Tibial artery (tissue), 4 donors: ENCODE measurements at regions of chr16 and their contacts with region 1.

Region 1: DNA sequence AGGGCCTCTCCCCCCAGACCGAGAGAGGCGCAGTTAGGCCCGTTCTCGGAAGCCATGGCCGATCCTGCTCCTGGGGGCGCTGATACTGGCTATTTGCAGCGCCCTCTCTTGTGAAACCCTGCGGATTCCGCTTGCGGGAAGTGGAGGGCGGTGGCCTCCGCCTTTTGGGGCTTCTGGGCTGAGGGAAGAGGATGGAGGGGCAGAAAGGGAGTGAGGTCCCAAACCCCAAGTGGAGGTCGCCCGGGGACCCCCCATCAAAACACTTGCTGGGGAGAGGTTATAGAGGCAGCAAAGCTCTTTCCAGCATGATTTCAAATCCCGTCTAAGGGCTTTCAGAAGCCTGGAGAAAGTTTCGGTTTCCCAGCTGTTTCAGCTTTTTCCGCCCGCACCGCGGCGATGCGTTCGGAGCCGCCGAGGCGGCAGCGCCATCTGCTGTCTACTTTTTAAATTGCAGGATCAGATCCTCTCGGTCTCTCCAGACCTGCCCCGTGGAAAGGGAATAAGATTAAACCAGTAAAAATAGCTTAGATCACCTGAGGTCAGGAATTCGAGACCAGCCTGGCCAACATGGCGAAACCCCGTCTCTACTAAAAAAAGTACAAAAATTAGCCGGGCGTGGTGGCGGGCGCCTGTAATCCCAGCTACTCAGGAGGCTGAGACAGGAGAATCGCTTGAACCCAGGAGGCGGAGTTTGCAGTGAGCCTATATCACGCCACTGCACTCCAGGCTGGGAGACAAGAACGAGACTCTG is 15.8 kb downstream of the SNX20 start:
- DNase-seq: peak; percentile 66 to 88
- H3K4me3 ChIP-seq: peak overlapping the region; percentile 50 to 56
- H3K27ac ChIP-seq: peak overlapping the region; percentile 64 to 67
- H3K4me1 ChIP-seq: peaks cover 0 to 33% (median 12%) of the 10 kb centered on the region in 4 donors
- H3K27me3 ChIP-seq: no peaks in the 10 kb centered on the region
- CTCF ChIP-seq: peak; percentile 85 to 91

Region 2: DNA sequence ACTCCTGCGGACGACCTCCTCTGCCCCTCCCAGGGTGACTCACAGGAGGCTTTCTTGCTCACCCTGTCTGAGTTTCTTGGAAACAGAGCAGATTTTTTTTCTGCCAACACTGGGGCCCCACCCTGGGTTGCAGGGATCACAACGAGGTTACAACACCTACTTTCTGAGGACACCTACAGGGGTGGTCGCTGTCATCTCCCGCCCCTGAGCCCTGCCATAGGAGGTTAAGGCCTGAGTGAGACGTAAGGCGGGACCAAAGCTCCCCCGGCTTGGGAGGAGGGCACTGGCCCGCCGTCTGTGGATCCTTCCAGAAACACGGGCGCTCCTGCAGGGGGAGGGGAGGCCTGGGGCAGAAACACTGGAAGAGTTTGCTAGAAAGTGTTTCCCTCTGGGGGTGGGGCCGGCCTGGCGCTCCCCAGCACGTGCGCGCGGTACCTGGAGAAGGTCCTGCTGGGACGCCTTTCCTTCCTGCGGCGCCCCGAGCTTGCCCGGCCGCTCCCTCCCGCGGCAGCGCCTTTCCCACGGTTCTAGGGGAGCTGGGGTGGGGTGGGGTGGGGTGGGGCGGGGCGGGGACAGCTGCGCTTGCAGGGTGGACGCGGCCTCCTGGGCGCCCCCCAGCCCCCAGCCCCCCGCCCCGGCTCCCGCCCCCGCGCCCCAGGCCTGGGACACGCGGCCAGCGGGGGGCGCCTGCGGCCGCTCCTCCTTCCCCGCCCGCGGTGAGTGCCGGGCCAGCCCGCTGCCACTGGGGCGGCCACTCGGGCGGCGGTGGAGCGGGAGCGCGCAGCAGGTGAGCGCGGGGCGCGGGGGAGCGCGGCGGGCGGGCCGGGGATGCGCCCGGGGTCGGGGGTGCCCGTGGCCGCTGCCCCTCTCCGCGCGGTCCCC is 419.6 kb before region 1 on chr16:
- intact Hi-C with region 1: loop called (anchors 10 kb)
- DNase-seq: peak; percentile 63 to 77
- H3K4me3 ChIP-seq: peak overlapping the region; percentile 61 to 76
- H3K27ac ChIP-seq: peak overlapping the region; percentile 65
- H3K4me1 ChIP-seq: peaks cover 0 to 21% (median 18%) of the 10 kb centered on the region in 4 donors
- H3K27me3 ChIP-seq: no peaks in the 10 kb centered on the region
- CTCF ChIP-seq: peak in 1 of 2 experiments; percentile 10

Region 3: DNA sequence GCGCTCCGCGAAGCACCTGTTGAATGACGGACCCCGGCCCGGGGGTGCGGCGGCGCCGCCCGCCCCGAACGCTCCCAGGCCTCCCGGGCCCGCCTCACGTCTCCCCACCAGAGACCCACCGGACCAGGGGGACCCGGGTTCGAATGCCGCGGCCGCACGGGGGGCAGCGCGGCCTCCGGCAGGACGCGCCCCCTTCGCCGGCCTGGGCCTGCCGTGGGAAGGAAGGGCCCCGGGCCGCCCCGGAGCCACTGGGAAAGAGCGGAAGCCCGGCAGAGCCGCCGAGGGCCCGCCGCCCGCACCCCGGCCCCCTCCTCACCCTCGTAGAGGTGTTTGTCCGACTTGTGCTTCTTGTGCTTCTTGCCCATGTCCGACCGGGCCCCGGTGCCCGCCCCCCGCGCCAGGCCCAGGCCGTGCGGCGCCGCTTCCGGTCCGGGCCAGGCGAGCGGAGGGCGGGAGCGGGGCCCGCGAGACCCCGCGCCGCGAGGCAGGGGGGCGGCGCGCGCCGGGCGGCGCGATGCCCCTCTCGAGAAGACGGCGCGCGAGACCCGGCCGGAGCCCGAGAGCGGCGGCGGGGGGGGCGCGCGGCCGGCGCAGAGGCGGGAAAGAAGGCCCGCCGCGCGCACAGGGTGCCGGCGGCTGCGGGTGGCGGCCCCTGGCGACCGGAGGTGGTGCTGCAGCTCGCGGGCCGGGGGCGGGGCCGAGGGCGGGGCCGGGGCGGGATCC is 296.7 kb before region 1 on chr16 and contains the start of gene BRD7:
- intact Hi-C with region 1: loop called (anchors 5 kb)
- DNase-seq: peak; percentile 33 to 85
- H3K4me3 ChIP-seq: peak within 1 kb of the TSS; percentile 87 to 97
- H3K27ac ChIP-seq: peak within 1 kb of the TSS; percentile 77 to 87
- H3K4me1 ChIP-seq: peaks cover 0 to 70% (median 44%) of the 10 kb centered on the region in 4 donors
- H3K27me3 ChIP-seq: no peaks in the 10 kb centered on the region
- CTCF ChIP-seq: peak; percentile 40 to 73

Region 4: DNA sequence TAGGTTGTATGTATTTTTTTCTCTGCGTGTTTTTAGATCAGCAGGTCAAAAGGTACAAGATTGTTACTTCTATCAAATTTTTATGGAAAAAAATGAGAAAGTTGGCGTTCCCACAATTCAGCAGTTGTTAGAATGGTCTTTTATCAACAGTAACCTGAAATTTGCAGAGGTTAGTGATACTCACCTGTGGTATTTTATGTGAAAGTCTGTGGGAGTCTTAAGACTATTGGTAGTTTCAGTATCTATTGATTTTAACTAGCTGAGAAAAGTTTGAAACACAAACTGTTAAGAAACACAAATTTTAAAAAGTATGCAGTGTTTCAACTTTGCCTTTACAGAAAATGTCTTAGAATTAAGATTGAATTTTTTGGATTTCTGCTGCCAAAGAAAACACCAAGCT is 126.2 kb after region 1 on chr16:
- intact Hi-C with region 1: no loop called
- DNase-seq: no peak
- H3K4me3 ChIP-seq: no peak overlapping the region
- H3K27ac ChIP-seq: no peak overlapping the region
- H3K4me1 ChIP-seq: no peaks in the 10 kb centered on the region
- H3K27me3 ChIP-seq: no peaks in the 10 kb centered on the region
- CTCF ChIP-seq: no peak

Region 5: DNA sequence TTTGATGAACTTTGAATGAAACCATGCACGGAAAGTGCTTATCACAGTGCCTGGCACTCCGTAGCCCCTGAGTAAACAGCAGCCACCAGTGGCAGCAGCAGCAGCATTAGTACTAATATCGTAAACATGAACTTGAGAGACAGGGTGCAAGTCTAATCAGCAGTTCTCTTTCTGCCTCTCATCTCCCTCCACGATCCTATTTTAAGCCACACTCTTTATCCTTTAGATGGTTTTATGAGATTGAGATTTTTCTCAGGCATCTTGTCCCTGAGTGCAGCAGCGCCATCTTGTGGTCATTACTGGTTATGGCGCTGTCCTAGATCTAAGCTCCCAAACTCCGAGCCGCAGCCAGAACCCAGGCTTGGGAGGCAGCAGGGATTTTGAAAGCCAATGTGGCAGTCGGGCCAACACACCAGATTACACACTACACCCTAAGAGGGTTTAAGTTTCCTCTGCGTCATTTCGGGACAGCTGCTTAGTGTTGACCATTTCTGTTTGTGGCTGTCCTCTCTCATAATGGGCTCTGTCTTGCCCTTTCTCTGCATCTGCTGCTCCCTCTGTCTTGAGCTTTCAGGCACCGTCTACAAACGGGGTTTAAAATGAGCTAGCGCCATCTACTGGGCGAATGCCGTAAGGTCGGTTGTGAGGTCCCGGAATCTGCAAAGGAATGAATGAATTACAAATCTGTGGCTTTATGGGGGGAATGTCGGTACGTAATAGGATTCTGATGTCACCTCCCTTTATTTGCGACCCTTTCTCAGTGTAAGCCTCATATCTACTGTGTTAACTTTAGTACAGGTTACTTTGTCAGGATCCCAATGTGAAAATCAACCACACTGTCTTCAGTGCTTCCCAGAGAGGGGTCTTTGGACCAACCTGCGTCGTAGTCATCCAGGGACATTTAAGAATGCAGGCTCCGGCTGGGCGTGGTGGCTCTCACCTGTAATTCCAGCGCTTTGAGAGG is 141.1 kb after region 1 on chr16:
- intact Hi-C with region 1: loop called (anchors 5 kb)
- DNase-seq: peak; percentile 86 to 89
- H3K4me3 ChIP-seq: peak overlapping the region; percentile 32 to 42
- H3K27ac ChIP-seq: peak overlapping the region in 1 of 2 donors; percentile 40
- H3K4me1 ChIP-seq: peaks cover 0 to 7% (median 2%) of the 10 kb centered on the region in 4 donors
- H3K27me3 ChIP-seq: no peaks in the 10 kb centered on the region
- CTCF ChIP-seq: peak; percentile 90 to 92